ENCODE measurements at regions of chr3 and their contacts with region 1.

Region 1: DNA sequence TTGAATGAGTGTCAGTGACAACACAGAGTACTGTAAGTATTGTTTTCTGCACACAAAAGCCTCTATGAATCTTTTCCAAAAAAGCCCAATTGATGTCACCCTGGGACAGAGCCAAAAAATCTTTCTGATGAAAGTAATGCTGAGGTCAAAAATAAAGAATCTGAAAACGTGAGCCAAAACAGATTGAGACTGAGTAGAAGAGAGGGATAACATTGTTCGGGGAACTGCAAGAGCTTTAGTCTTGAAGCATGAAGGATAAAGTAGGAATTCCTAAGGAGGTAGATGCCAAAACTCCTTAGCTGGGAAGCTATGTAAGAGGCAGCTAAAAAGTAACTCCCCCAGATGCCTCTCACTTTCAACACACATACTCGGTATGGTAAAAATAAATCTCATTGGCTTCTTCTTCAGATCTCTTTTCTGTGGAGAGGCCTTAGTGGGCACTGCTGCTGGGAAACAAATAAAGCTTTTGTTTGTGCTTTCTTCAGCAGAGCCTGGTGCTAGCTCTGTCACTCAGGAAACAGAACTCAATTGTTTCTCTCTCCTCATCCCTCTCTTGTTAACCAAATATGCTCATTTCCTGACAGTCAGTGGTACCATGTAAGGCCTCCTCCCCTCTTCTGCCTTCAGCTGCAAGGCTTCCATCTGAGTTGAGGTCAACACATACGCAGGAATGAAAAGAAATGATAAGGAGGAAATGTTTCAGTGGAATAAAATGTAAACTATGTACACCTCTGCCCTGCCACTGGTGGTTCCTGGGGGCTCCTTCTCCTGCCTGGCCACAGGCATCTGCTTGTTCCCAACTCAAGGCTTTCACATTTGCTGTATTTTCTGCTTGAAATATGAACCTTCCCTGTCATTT is 58.1 kb downstream of the CD200 start:
- DNase-seq: peak; percentile 88
- H3K4me3 ChIP-seq: no peak overlapping the region
- H3K27ac ChIP-seq: peak overlapping the region; percentile 85
- H3K4me1 ChIP-seq: peaks cover 30% of the 10 kb centered on the region
- H3K27me3 ChIP-seq: no peaks in the 10 kb centered on the region
- CTCF ChIP-seq: no peak

Region 2: DNA sequence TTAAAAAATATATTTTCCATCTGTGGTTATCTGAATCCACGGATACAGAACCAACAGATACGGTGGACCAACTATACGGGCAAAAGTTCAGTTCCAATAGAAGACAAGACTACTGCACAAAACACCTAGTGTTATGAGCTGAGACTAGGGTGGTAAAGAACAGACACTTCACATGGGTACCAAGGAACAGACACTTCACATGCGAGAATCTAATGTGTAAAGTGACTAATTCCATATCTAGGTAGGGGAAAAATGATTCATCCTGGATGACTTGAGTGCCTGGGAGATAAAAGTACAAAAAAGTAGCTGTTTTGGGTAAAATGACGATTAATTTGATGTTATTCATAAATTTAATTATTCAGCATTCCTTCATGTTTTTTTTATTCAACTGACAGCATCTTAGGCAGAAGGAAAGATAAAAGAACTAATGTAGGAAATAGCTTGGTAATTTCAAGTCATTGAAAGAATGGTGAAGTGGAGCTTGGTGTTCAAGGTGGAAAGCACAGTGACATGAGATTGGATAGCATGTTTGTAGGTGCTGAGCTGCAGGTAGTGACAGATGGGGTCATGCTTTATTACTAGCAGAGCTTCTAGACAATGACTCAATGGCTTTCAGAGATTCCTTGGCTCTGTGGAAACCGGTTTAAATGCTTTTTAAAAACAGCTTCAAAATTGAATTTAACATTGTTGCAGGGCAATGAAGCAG is 52.8 kb before region 1 on chr3:
- CTCF ChIA-PET with region 1: no interaction called
- dilution Hi-C with region 1: no loop called
- in situ Hi-C with region 1: no loop called
- intact Hi-C with region 1: no loop called
- DNase-seq: peak; percentile 30
- H3K4me3 ChIP-seq: no peak overlapping the region
- H3K27ac ChIP-seq: no peak overlapping the region
- H3K4me1 ChIP-seq: peaks cover 6% of the 10 kb centered on the region
- H3K27me3 ChIP-seq: no peaks in the 10 kb centered on the region
- CTCF ChIP-seq: no peak

Region 3: DNA sequence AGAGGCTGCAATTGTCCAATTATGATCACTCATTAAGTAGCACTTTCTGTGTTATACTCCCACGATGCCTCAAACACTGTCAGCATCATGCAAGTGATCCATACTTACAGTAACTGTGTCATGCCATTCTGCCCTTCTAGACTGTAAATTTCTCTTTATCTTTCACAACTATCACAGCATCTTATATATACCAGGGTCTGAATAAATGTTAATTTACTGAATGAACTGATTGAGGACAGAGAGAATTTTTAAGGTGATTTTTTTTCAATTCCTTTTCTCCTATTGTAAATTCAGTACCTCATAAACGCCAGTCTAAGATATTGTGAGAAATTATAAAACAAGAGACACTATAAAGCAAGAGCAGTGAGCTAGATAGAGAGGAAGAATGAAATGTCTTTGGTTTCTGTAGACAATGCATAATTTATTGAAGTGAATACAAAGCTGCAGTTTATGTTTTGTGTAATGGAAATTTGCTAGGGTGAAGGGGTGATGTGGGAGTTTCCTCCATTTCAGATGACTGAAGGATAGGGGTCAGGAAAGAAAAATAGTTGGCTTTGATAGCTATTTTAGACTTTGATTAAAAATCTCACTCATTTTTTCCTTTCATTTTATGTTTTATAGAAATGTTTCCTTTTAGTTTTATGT is 40.7 kb before region 1 on chr3:
- CTCF ChIA-PET with region 1: no interaction called
- dilution Hi-C with region 1: loop called (anchors 5 kb)
- in situ Hi-C with region 1: no loop called
- intact Hi-C with region 1: no loop called
- DNase-seq: no peak
- H3K4me3 ChIP-seq: no peak overlapping the region
- H3K27ac ChIP-seq: no peak overlapping the region
- H3K4me1 ChIP-seq: peaks cover 5% of the 10 kb centered on the region
- H3K27me3 ChIP-seq: no peaks in the 10 kb centered on the region
- CTCF ChIP-seq: no peak

Region 4: DNA sequence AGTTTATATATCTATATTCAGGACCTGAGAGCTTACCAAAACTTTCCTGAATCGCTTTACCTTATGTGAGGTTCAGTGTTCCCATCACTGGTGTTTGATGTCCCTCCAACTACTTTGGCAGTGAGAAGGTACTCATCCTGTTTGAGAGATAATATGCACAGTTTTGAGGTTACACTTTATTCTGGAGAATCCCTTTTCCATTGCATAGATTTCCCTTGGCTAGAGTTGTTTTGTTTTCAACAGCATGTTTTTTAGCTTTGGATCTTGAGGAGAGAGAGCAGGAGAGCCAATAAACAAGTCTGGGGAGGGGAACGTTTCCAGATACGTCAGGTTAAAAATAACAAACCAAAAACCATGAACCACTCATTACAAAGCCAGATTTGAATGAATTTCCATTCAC is 24.5 kb before region 1 on chr3:
- CTCF ChIA-PET with region 1: interaction called, 10 read pairs
- dilution Hi-C with region 1: no loop called
- in situ Hi-C with region 1: no loop called
- intact Hi-C with region 1: no loop called
- DNase-seq: no peak
- H3K4me3 ChIP-seq: no peak overlapping the region
- H3K27ac ChIP-seq: no peak overlapping the region
- H3K4me1 ChIP-seq: peaks cover 27% of the 10 kb centered on the region
- H3K27me3 ChIP-seq: no peaks in the 10 kb centered on the region
- CTCF ChIP-seq: no peak

Region 5: DNA sequence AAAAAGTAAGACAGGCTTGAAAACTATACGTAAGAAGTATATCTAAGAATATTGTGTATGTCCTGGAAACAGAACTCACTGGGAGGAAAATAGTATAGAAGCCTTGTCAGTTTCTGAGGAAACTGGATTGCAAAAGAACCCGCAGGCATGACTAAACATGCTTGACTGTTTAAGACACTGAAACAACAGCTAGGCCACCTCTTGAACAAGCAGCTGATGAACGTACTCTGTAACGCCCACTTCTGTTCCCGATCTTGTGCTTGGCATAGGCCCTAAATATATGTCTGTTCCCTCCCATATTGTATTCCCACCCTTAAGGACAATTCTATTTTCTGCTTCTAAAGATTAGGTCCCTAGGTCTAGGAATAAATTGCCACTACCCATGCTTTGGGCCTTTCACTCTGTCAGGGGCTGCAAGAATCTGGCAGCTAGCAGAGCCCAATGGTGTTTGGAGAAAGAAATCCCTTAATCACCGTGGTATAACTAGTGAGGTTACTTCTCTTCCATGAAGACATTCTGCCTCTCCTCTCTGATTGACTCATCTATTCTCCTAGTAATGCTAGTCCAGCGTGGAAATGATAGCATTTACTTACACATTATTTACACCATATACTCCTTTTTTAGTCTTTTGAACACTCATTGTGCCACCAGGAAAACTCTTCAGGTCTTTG is 11.9 kb before region 1 on chr3:
- CTCF ChIA-PET with region 1: no interaction called
- dilution Hi-C with region 1: no loop called
- in situ Hi-C with region 1: no loop called
- intact Hi-C with region 1: loop called (anchors 1 kb)
- DNase-seq: peak; percentile 97
- H3K4me3 ChIP-seq: no peak overlapping the region
- H3K27ac ChIP-seq: peak overlapping the region; percentile 95
- H3K4me1 ChIP-seq: peaks cover 28% of the 10 kb centered on the region
- H3K27me3 ChIP-seq: no peaks in the 10 kb centered on the region
- CTCF ChIP-seq: no peak

Region 6: GRCh38 chr3:112519424-112520001 is 128.5 kb after region 1 on chr3:
- CTCF ChIA-PET with region 1: no interaction called
- dilution Hi-C with region 1: no loop called
- in situ Hi-C with region 1: no loop called
- intact Hi-C with region 1: no loop called
- DNase-seq: peak; percentile 58
- H3K4me3 ChIP-seq: no peak overlapping the region
- H3K27ac ChIP-seq: no peak overlapping the region
- H3K4me1 ChIP-seq: no peaks in the 10 kb centered on the region
- H3K27me3 ChIP-seq: no peaks in the 10 kb centered on the region
- CTCF ChIP-seq: peak; percentile 74 to 76

Region 7: DNA sequence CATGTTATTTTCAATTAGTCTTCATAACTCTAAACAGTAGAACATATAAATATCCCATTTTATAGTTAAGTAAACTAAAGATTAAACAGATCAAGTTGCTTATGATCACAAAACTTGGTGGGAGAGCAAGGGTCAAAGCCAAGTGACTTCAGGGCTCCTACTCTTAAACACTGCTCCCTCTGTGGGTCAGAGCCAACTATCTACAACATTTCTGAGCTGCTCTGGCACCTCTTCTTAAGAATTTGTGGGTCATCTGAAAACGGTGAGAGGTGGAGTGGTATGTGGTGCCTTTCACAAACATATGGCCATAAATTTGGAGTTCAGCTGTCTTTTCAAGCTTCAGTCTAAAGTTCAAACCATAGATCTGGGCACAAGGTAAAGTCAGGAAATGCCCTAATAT is 159.8 kb after region 1 on chr3:
- CTCF ChIA-PET with region 1: no interaction called
- dilution Hi-C with region 1: no loop called
- in situ Hi-C with region 1: no loop called
- intact Hi-C with region 1: no loop called
- DNase-seq: no peak
- H3K4me3 ChIP-seq: no peak overlapping the region
- H3K27ac ChIP-seq: no peak overlapping the region
- H3K4me1 ChIP-seq: peaks cover 19% of the 10 kb centered on the region
- H3K27me3 ChIP-seq: no peaks in the 10 kb centered on the region
- CTCF ChIP-seq: no peak